HCT116 (cell line): ENCODE measurements at regions of chr9 and their contacts with region 1.

Region 1: GRCh38 chr9:125829743-125830142 is 82.6 kb downstream of the PBX3 start:
- DNase-seq: no peak
- ATAC-seq: no peak
- H3K4me3 ChIP-seq: no peak overlapping the region
- H3K27ac ChIP-seq: no peak overlapping the region
- H3K4me1 ChIP-seq: peaks cover 3 to 5% of the 10 kb centered on the region in 2 experiments; a peak in 1 of 4 replicates
- H3K27me3 ChIP-seq: no peaks in the 10 kb centered on the region
- CTCF ChIP-seq: no peak
- POLR2A ChIP-seq: no peak
- RAD21 ChIP-seq: no peak

Region 2: GRCh38 chr9:125815568-125815967 is 14.2 kb before region 1 on chr9:
- CTCF ChIA-PET with region 1: no interaction called
- POLR2A ChIA-PET with region 1: no interaction called
- RAD21 ChIA-PET with region 1: no interaction called
- intact Hi-C with region 1: loop called (anchors 2 kb)
- DNase-seq: peak; percentile 51
- ATAC-seq: peak; percentile 47; the same call in 1 of the 2 replicates
- H3K4me3 ChIP-seq: no peak overlapping the region
- H3K27ac ChIP-seq: no peak overlapping the region
- H3K4me1 ChIP-seq: peaks cover 0 to 14% of the 10 kb centered on the region in 2 experiments; a peak in 2 of 4 replicates
- H3K27me3 ChIP-seq: no peaks in the 10 kb centered on the region
- CTCF ChIP-seq: no peak
- POLR2A ChIP-seq: no peak
- RAD21 ChIP-seq: no peak